AG04449 (cell line): ENCODE measurements at regions of chr6 and their contacts with region 1.

Region 1: DNA sequence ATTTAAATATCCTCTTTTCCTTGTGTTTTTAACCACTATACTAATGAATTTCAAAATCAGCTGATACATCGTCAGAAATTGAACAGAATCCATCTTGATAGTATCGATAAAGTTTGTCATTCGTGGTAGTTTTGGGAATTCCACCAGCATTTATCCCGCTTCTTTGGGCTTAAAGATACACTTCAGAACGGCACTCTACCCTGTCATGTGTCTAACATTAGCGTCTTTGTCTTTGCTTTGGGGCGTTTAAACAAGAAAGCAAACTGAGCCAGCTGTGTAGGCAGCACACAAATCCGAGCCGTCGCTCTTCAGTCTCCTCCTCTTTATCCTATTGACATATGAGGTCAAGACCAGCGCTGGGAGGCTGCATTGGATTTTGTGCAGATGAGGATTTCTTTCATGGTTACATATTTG is 27.5 kb upstream of the NHSL1 start:
- DNase-seq: no peak
- H3K4me3 ChIP-seq: no peak overlapping the region; the same call in 1 of the 2 replicates
- CTCF ChIP-seq: no peak

Region 2: DNA sequence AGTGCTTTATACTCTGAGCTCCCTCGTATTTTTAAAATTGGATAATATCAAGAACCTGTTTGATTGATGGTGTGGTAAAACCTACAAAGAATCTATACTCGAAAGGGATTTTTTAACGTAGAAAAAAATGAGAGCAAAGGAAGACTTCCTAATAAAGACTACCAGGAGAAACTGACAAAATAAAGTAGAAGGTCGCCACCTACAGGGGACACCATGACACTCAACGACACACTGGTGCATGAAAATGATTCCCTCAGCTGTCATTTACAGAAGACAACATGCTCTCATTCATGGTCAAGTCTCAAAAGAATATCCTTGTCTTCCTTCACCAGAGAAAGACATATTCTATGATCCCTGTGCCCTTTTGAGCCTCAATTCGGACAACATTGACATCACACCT is 17.5 kb before region 1 on chr6:
- CTCF ChIA-PET with region 1: interaction called, 11 read pairs
- POLR2A ChIA-PET with region 1: no interaction called
- DNase-seq: no peak
- H3K4me3 ChIP-seq: no peak overlapping the region
- CTCF ChIP-seq: peak; percentile 21

Region 3: GRCh38 chr6:138538390-138539031 is 11.7 kb after region 1 on chr6:
- CTCF ChIA-PET with region 1: interaction called, 29 read pairs
- POLR2A ChIA-PET with region 1: interaction called, 4 read pairs
- DNase-seq: no peak
- H3K4me3 ChIP-seq: no peak overlapping the region
- CTCF ChIP-seq: no peak